Naive thymus-derived CD4-positive, alpha-beta T cell (primary cell): ENCODE measurements at regions of chr16 and their contacts with region 1.

Region 1: GRCh38 chr16:53054670-53055485 is at the start of gene CHD9:
- DNase-seq: peak; percentile 48 to 84 (median 75)
- ATAC-seq: peak; percentile 96
- H3K4me3 ChIP-seq: peak within 1 kb of the TSS; percentile 74
- H3K4me3 Mint-ChIP-seq: peak within 1 kb of the TSS; percentile 77 to 88 (median 84)
- H3K27ac ChIP-seq: peak within 1 kb of the TSS; percentile 36
- H3K27ac Mint-ChIP-seq: peak within 1 kb of the TSS in 6 of 9 donors; percentile 6 to 86 (median 41)
- H3K4me1 ChIP-seq: peaks cover 6 to 9% of the 10 kb centered on the region in 2 donors
- H3K4me1 Mint-ChIP-seq: peaks cover 6 to 42% (median 12%) of the 10 kb centered on the region in 7 donors
- H3K27me3 ChIP-seq: no peaks in the 10 kb centered on the region
- H3K27me3 Mint-ChIP-seq: peaks cover 0 to 8% (median 5%) of the 10 kb centered on the region in 5 donors
- total RNA-seq, gene CHD9: 23.8 to 46.4 (median 36.3) TPM

Region 2: DNA sequence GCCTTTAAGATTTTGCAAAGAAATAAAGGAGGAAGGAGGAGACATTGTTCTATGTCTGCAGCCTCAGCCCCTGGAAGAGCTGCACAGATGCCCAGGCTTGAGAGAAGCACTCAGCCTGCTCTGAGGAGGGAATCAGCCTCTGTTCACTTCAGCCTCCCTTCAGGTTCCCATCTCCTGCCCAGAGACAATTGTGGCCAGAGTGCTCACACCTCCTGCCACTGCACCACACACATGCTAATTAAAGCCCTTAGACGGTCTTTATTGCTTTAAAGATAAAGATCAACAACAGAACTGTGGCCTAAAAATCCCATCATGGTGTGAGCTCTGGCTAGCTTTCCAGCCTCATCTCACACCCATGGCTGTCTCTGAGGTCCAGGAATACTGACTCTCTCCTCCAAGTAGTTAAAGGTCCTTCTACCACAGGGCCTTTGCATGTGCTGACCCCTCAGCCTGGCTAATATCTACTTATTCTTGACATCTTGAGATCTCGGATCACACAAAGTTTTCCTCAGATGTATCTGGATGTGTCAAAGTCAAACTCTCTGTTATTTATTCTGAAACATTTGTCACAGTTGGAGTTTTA is 36.0 kb before region 1 on chr16:
- CTCF ChIA-PET with region 1: no interaction called
- POLR2A ChIA-PET with region 1: no interaction called
- intact Hi-C with region 1: no loop called
- DNase-seq: no peak
- ATAC-seq: no peak
- H3K4me3 ChIP-seq: no peak overlapping the region
- H3K4me3 Mint-ChIP-seq: no peak overlapping the region
- H3K27ac ChIP-seq: no peak overlapping the region
- H3K27ac Mint-ChIP-seq: no peak overlapping the region
- H3K4me1 ChIP-seq: no peaks in the 10 kb centered on the region
- H3K4me1 Mint-ChIP-seq: no peaks in the 10 kb centered on the region
- H3K27me3 ChIP-seq: peaks cover 0 to 6% of the 10 kb centered on the region in 2 donors
- H3K27me3 Mint-ChIP-seq: peaks cover 0 to 19% (median 14%) of the 10 kb centered on the region in 5 donors

Region 3: GRCh38 chr16:53099318-53100130 is 44.6 kb after region 1 on chr16:
- CTCF ChIA-PET with region 1: interaction called, 3 read pairs
- POLR2A ChIA-PET with region 1: no interaction called
- intact Hi-C with region 1: loop called in 1 of 2 experiments (anchors 2 kb)
- DNase-seq: peak; percentile 4 to 65 (median 13)
- ATAC-seq: peak; percentile 68
- H3K4me3 ChIP-seq: peak overlapping the region; percentile 60
- H3K4me3 Mint-ChIP-seq: peak overlapping the region; percentile 79 to 96 (median 87)
- H3K27ac ChIP-seq: peak overlapping the region; percentile 29
- H3K27ac Mint-ChIP-seq: peak overlapping the region; percentile 12 to 91 (median 70)
- H3K4me1 ChIP-seq: peaks cover 11 to 24% of the 10 kb centered on the region in 2 donors
- H3K4me1 Mint-ChIP-seq: peaks cover 10 to 27% (median 17%) of the 10 kb centered on the region in 7 donors
- H3K27me3 ChIP-seq: no peaks in the 10 kb centered on the region
- H3K27me3 Mint-ChIP-seq: no peaks in the 10 kb centered on the region

Region 4: DNA sequence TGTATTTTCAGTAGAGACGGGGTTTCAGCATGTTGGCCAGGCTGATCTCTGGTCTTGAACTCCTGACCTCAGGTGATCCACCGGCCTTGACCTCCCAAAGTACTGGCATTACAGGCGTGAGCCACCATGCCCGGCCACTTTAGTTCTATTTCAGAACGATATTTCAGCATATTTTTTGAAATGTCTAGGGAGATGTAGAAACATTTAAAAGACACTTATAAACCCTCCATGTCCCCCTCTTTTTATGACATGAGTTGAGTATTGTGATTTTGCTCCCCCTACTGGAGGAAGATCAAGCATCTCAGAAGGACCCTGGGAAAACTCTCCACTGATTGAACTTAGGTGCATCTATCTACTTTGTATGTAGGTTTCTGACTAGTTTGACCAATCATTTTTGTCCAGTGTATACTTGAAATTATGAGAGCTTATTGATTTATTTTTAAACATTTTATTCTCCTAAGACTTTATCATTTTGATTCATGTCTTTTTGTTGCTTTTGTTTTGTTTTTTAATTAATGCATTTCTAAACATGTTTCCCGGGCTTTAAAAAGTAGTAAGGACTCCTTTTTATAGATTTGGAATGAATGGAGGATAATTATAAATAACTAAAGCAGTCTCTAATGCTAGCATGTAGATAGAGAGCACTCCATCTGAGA is 105.0 kb after region 1 on chr16:
- CTCF ChIA-PET with region 1: interaction called, 21 read pairs
- POLR2A ChIA-PET with region 1: interaction called, 3 read pairs
- intact Hi-C with region 1: loop called (anchors 1 kb)
- DNase-seq: peak in 7 of 9 donors; percentile 11 to 54 (median 41)
- ATAC-seq: peak; percentile 76
- H3K4me3 ChIP-seq: no peak overlapping the region
- H3K4me3 Mint-ChIP-seq: no peak overlapping the region
- H3K27ac ChIP-seq: no peak overlapping the region
- H3K27ac Mint-ChIP-seq: no peak overlapping the region
- H3K4me1 ChIP-seq: no peaks in the 10 kb centered on the region
- H3K4me1 Mint-ChIP-seq: peaks cover 2 to 13% (median 6%) of the 10 kb centered on the region in 7 donors
- H3K27me3 ChIP-seq: no peaks in the 10 kb centered on the region
- H3K27me3 Mint-ChIP-seq: no peaks in the 10 kb centered on the region

Region 5: GRCh38 chr16:53220585-53220984 is 165.7 kb after region 1 on chr16:
- CTCF ChIA-PET with region 1: no interaction called
- POLR2A ChIA-PET with region 1: no interaction called
- intact Hi-C with region 1: loop called (anchors 5 kb)
- DNase-seq: peak in 1 of 9 donors; percentile 9
- ATAC-seq: peak; percentile 64
- H3K4me3 ChIP-seq: no peak overlapping the region
- H3K4me3 Mint-ChIP-seq: no peak overlapping the region
- H3K27ac ChIP-seq: no peak overlapping the region
- H3K27ac Mint-ChIP-seq: no peak overlapping the region
- H3K4me1 ChIP-seq: no peaks in the 10 kb centered on the region
- H3K4me1 Mint-ChIP-seq: peaks cover 0 to 4% (median 3%) of the 10 kb centered on the region in 7 donors
- H3K27me3 ChIP-seq: no peaks in the 10 kb centered on the region
- H3K27me3 Mint-ChIP-seq: no peaks in the 10 kb centered on the region

Region 6: DNA sequence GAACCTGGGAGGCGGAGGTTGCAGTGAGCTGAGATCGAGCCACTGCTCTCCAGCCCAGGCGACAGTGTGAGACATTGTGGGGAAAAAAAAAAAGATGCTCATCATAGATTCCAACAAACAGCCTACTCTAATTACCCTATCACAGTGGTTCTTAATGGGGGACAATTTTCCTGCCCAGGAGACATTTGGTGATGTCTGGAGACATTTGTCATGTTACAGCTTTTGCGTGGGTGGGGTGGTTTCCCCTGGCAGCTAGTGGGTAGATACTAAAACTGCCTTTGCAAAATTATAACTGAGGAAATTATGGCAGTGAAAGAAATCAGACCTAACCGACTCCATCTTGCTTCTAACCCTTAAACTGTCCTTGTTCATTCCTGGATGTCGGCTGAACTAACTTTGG is 286.9 kb after region 1 on chr16:
- CTCF ChIA-PET with region 1: no interaction called
- POLR2A ChIA-PET with region 1: no interaction called
- intact Hi-C with region 1: no loop called
- DNase-seq: no peak
- ATAC-seq: no peak
- H3K4me3 ChIP-seq: no peak overlapping the region
- H3K4me3 Mint-ChIP-seq: no peak overlapping the region
- H3K27ac ChIP-seq: no peak overlapping the region
- H3K27ac Mint-ChIP-seq: no peak overlapping the region
- H3K4me1 ChIP-seq: no peaks in the 10 kb centered on the region
- H3K4me1 Mint-ChIP-seq: peaks cover 0 to 5% (median 0%) of the 10 kb centered on the region in 7 donors
- H3K27me3 ChIP-seq: no peaks in the 10 kb centered on the region
- H3K27me3 Mint-ChIP-seq: peaks cover 0 to 7% (median 0%) of the 10 kb centered on the region in 5 donors

Region 7: DNA sequence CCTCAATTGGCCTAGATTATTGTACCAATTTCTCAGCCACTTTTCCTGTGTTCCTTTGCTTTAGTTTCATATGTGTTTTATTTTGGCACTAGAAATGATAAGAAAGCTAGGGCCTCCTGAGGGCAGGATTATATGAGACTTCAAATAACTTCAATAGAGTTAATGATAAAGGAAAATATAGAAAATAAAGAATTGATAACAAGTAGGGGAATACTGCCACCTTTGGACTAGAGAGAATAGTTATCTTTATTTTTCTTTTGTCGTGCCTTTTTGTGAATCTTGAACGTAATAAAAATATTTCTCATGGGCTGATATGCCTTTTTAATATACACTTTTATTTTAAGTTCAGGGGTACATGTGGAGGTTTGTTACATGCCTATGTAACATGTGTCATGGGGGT is 350.1 kb after region 1 on chr16:
- CTCF ChIA-PET with region 1: no interaction called
- POLR2A ChIA-PET with region 1: no interaction called
- intact Hi-C with region 1: loop called in 1 of 2 experiments (anchors 10 kb)
- DNase-seq: no peak
- ATAC-seq: no peak
- H3K4me3 ChIP-seq: no peak overlapping the region
- H3K4me3 Mint-ChIP-seq: no peak overlapping the region
- H3K27ac ChIP-seq: no peak overlapping the region
- H3K27ac Mint-ChIP-seq: peak overlapping the region in 2 of 9 donors; percentile 16 to 78
- H3K4me1 ChIP-seq: no peaks in the 10 kb centered on the region
- H3K4me1 Mint-ChIP-seq: peaks cover 0 to 7% (median 0%) of the 10 kb centered on the region in 7 donors
- H3K27me3 ChIP-seq: no peaks in the 10 kb centered on the region
- H3K27me3 Mint-ChIP-seq: peaks cover 0 to 7% (median 0%) of the 10 kb centered on the region in 5 donors

Region 8: GRCh38 chr16:53509906-53510703 is 455.2 kb after region 1 on chr16:
- CTCF ChIA-PET with region 1: interaction called, 8 read pairs
- POLR2A ChIA-PET with region 1: no interaction called
- intact Hi-C with region 1: loop called (anchors 1 kb)
- DNase-seq: peak; percentile 34 to 72 (median 50)
- ATAC-seq: peak; percentile 86
- H3K4me3 ChIP-seq: peak overlapping the region; percentile 21
- H3K4me3 Mint-ChIP-seq: peak overlapping the region; percentile 8 to 75 (median 52)
- H3K27ac ChIP-seq: no peak overlapping the region
- H3K27ac Mint-ChIP-seq: peak overlapping the region in 4 of 9 donors; percentile 14 to 48 (median 31)
- H3K4me1 ChIP-seq: peaks cover 0 to 13% of the 10 kb centered on the region in 2 donors
- H3K4me1 Mint-ChIP-seq: peaks cover 1 to 44% (median 21%) of the 10 kb centered on the region in 7 donors
- H3K27me3 ChIP-seq: no peaks in the 10 kb centered on the region
- H3K27me3 Mint-ChIP-seq: peaks cover 0 to 6% (median 0%) of the 10 kb centered on the region in 5 donors